ENCODE measurements at regions of chr1 and their contacts with region 1.

Region 1: GRCh38 chr1:237562242-237562823 is 328.4 kb downstream of the ZP4 start:
- DNase-seq: peak in 1 of 2 experiments; percentile 69
- H3K4me3 ChIP-seq: no peak overlapping the region
- H3K27ac ChIP-seq: no peak overlapping the region
- H3K4me1 ChIP-seq: no peaks in the 10 kb centered on the region
- H3K27me3 ChIP-seq: no peaks in the 10 kb centered on the region
- CTCF ChIP-seq: peak; percentile 83

Region 2: DNA sequence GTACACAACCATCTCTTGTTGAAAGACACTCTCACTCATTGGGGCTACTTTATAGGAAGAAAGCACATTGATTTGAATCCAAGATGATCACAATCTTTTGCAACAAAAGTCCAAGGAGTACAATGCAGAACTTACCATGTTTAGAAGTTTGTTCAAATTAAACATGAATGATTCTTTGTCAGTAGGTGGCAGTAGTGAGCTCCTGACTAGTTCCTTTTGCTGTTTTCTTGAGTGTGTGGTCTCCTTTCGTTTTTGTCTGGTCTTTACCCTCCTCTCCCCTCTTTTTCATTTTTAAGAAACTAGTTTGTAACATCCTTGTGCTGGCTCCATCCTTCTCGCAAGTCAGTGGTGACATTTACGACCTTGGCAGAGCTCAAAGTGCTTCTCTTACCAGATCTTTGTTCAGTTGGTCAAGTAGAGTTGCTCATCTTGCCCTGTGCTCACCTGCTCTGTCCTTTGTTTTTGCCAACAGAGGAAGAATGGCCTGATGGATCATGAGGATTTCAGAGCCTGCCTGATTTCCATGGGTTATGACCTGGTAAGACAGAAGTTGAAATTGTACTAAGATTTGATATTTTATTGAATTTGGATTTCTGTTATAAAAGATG is 803.0 kb before region 1 on chr1:
- CTCF ChIA-PET with region 1: no interaction called
- POLR2A ChIA-PET with region 1: no interaction called
- intact Hi-C with region 1: loop called (anchors 10 kb)
- DNase-seq: no peak
- H3K4me3 ChIP-seq: no peak overlapping the region
- H3K27ac ChIP-seq: no peak overlapping the region
- H3K4me1 ChIP-seq: no peaks in the 10 kb centered on the region
- H3K27me3 ChIP-seq: peaks cover 76% of the 10 kb centered on the region
- CTCF ChIP-seq: peak; percentile 79

Region 3: DNA sequence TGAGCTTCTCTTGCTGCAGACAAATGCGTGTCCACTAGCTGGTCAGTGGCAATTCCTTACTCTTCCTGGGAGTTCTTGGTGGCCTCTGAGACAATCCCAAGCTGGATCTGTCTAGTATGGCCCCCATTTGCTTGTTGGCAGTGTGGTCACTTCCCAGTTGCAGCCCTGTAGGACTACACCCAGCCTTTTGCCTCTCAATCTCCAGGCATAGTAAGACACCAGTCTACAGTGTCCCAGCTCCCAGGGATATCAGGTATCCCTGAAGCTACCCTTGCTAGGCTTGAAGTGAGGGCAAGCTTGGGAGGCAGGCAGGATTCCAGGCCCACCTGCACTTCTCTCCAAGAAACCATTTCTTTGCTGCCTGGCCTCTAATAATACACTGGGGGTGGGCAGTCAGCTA is 203.8 kb before region 1 on chr1:
- CTCF ChIA-PET with region 1: no interaction called
- POLR2A ChIA-PET with region 1: no interaction called
- intact Hi-C with region 1: no loop called
- DNase-seq: no peak
- H3K4me3 ChIP-seq: no peak overlapping the region
- H3K27ac ChIP-seq: no peak overlapping the region
- H3K4me1 ChIP-seq: no peaks in the 10 kb centered on the region
- H3K27me3 ChIP-seq: peaks cover 3% of the 10 kb centered on the region; the same call in 1 of the 2 replicates
- CTCF ChIP-seq: no peak